ENCODE measurements at regions of chr9 and their contacts with region 1.

Region 1: GRCh38 chr9:34126207-34127034 is at the start of gene DCAF12:
- DNase-seq: peak; percentile 78 to 93 (median 87)
- ATAC-seq: peak; percentile 90
- H3K4me3 ChIP-seq: peak within 1 kb of the TSS; percentile 88
- H3K27ac ChIP-seq: peak within 1 kb of the TSS; percentile 98
- H3K4me1 ChIP-seq: peaks cover 20 to 27% of the 10 kb centered on the region in 2 experiments
- H3K27me3 ChIP-seq: no peaks in the 10 kb centered on the region
- CTCF ChIP-seq: peak in 1 of 3 experiments; percentile 15; a peak in 1 of 6 replicates
- EP300 ChIP-seq: peak; percentile 13; the same call in 1 of the 2 replicates
- POLR2A ChIP-seq: peak; percentile 91
- RAD21 ChIP-seq: no peak
- polyA plus RNA-seq, gene DCAF12: 10.9 to 11.6 TPM

Region 2: DNA sequence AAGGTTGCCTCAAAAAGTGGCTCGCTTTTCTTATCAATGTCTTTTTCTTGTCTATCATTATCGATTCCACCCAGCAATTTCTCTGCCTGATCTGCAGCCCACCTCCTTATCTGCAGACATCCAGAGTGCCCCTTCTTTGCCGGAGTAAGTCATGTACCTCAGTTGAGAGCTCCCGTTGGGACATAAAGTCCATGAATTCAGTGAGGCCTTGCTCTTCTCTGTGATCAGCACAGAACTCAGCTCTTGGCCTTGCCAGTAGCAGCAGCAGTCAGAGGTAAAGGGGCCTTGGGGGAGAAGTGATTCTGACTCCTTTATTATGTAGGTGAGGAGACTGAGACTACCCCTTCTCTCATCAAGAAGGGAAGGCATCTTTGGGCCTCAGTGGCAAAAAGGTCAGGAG is 25.0 kb after region 1 on chr9:
- CTCF ChIA-PET with region 1: no interaction called
- POLR2A ChIA-PET with region 1: interaction called, 11 read pairs
- in situ Hi-C with region 1: no loop called
- intact Hi-C with region 1: no loop called
- DNase-seq: peak in 3 of 4 experiments; percentile 37 to 64 (median 37)
- ATAC-seq: peak; percentile 53
- H3K4me3 ChIP-seq: peak overlapping the region; percentile 8
- H3K27ac ChIP-seq: peak overlapping the region; percentile 98
- H3K4me1 ChIP-seq: peaks cover 29 to 38% of the 10 kb centered on the region in 2 experiments
- H3K27me3 ChIP-seq: no peaks in the 10 kb centered on the region
- CTCF ChIP-seq: no peak
- EP300 ChIP-seq: no peak
- POLR2A ChIP-seq: no peak
- RAD21 ChIP-seq: no peak

Region 3: DNA sequence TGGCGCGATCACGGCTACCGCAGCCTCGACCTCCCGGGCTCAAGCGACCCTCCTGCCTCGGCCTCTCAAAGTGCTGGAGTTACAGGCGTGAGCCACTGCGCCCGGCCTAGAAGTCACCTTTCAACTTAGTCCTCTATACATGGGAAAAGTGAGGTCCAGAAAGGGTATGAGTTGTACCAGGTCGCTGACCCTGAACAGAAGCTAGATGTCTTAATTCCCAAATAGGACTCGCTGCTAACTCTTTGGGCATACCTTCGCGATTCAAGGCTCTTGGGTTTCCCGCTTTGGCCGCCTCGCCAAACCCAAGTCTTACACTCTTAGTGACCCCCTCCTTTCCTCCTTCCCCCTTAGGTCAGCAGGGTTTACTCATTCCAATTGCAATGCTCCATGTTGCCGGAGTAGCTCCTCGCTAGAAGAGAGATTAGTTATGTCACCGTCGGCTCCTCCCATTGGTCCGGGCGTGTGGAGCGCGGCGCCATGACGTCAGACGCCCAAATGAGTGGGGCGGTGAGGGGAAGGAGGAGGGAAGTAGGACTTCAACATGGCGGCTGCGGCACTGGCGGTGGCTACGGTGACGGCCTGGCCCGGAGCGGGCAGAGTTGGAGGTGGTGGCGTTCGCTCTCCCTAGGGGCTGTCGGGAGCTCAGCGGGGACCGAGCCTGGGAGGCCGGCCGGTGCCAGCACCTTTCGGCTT is 52.2 kb after region 1 on chr9 and contains the start of gene UBAP1:
- CTCF ChIA-PET with region 1: no interaction called
- POLR2A ChIA-PET with region 1: interaction called, 12 read pairs
- in situ Hi-C with region 1: no loop called
- intact Hi-C with region 1: no loop called
- DNase-seq: peak; percentile 87 to 96 (median 90)
- ATAC-seq: peak; percentile 97
- H3K4me3 ChIP-seq: peak within 1 kb of the TSS; percentile 88
- H3K27ac ChIP-seq: peak within 1 kb of the TSS; percentile 100
- H3K4me1 ChIP-seq: peaks cover 0 to 7% of the 10 kb centered on the region in 2 experiments; a peak in 1 of 5 replicates
- H3K27me3 ChIP-seq: no peaks in the 10 kb centered on the region
- CTCF ChIP-seq: no peak
- EP300 ChIP-seq: no peak
- POLR2A ChIP-seq: peak; percentile 94
- RAD21 ChIP-seq: no peak; a peak in 1 of 4 replicates
- polyA plus RNA-seq, gene UBAP1: 1.3 to 1.5 TPM

Region 4: DNA sequence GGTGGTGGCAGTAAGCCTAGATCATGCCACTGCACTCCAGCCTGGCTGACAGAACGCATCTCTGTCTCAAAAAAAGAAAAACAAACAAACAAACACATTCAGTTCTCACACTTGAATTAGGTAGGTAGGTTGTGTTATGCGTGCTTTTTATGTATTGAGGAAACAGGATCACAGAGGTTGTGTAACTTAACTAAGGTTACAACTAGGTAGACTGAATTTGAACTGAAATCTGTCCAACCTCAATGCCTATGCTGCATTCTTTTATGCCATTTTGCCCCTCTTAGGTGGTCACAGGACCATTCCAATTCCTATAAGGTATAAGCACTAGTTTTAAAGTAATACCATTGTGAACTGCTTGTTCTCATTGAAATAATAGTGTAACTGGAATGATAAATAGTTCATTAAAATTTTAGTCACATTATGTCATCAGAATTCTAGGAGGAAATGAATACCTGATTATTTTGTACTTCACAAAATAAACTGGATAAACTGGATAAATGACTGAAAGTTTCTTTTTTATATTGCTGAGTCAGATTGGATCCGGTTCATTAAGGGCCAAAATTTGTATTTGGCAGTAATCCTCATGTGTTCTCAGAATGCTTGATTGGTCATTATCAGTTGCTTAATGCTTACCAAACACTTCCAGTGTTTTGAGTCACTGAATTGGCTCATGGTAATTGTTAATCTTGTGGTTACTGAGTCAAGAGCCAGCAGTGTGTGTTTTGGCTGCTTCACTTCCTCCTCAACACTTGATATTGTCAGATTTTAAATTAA is 59.5 kb after region 1 on chr9:
- CTCF ChIA-PET with region 1: no interaction called
- POLR2A ChIA-PET with region 1: interaction called, 3 read pairs
- in situ Hi-C with region 1: no loop called
- intact Hi-C with region 1: loop called (anchors 5 kb)
- DNase-seq: peak in 2 of 4 experiments; percentile 28 to 44
- ATAC-seq: peak; percentile 68
- H3K4me3 ChIP-seq: no peak overlapping the region
- H3K27ac ChIP-seq: peak overlapping the region; percentile 12; the same call in 1 of the 3 replicates
- H3K4me1 ChIP-seq: peaks cover 0 to 9% of the 10 kb centered on the region in 2 experiments; a peak in 3 of 5 replicates
- H3K27me3 ChIP-seq: no peaks in the 10 kb centered on the region
- CTCF ChIP-seq: no peak
- EP300 ChIP-seq: no peak
- POLR2A ChIP-seq: no peak
- RAD21 ChIP-seq: no peak

Region 5: GRCh38 chr9:34252670-34253459 is 126.4 kb after region 1 on chr9:
- CTCF ChIA-PET with region 1: no interaction called
- POLR2A ChIA-PET with region 1: interaction called, 3 read pairs
- in situ Hi-C with region 1: no loop called
- intact Hi-C with region 1: loop called (anchors 10 kb)
- DNase-seq: peak; percentile 70 to 82 (median 76)
- ATAC-seq: peak; percentile 93
- H3K4me3 ChIP-seq: no peak overlapping the region
- H3K27ac ChIP-seq: no peak overlapping the region
- H3K4me1 ChIP-seq: peaks cover 0 to 4% of the 10 kb centered on the region in 2 experiments; a peak in 2 of 5 replicates
- H3K27me3 ChIP-seq: no peaks in the 10 kb centered on the region
- CTCF ChIP-seq: peak; percentile 72 to 88 (median 74)
- EP300 ChIP-seq: no peak
- POLR2A ChIP-seq: no peak
- RAD21 ChIP-seq: peak; percentile 40 to 73